ENCODE measurements at regions of chr12 and their contacts with region 1.

Region 1: DNA sequence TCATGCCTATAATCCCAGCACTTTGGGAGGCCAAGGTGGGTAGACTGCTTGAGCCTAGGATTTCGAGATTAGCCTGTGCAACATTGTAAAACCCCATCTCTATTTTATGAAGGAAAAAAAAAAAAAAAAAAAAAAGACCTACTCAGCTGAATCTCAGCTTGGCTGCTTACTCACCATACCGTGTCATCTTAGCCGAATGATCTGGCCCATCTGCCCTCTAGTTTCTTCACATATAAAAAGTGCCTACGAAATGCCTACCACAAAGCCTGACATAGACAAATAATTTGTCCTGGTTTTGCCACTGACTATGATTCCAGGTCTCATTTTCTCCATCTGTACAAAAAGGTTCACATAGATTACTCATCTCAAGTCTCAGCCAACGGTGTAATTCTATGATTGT is 10.1 kb downstream of the DIABLO start:
- DNase-seq: no peak
- ATAC-seq: no peak
- H3K4me3 ChIP-seq: no peak overlapping the region
- H3K27ac ChIP-seq: no peak overlapping the region
- H3K4me1 ChIP-seq: no peaks in the 10 kb centered on the region
- H3K27me3 ChIP-seq: no peaks in the 10 kb centered on the region
- CTCF ChIP-seq: no peak
- POLR2A ChIP-seq: no peak

Region 2: DNA sequence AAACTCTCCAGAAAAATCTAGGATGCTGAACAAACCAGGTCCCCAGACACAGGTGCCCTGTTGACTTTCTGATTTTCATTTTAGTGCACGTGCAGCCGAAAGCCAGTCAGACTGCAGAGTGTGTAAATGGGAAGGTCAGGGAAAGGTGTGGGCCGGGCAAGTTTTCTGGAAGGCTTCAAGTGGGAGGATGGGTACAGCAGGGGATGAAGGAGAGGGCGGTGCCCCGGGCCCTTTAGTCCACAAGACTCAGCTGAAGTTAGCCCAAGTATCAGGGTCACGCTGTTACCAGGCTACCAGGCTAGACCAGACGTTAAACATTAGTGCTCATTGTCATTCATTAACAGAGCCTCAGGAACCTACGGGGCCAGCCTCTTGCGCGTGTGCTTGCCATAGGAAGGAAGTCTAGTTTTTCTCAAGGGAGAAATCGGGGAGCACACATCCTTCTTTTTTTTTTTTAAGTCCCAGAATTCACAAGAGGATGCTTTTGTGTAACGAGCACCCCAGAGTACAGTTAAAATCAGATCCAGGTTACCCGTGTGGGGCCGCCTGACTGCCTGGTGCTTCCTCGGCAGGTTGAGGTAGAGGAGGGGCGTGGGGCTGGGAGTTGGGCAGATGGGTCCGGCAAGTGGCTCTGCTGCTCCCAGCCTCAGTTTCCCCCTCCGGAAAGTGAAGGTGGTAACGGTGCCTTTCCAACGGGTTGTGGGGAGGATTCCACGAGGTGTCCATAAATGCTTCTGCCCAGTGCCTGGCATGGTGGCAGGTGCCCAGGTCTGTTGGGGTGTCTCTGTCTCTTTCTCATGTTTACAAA is 175.0 kb before region 1 on chr12:
- intact Hi-C with region 1: loop called in 1 of 10 experiments (anchors 10 kb)
- DNase-seq: no peak
- ATAC-seq: peak in 2 of 4 donors; percentile 33 to 51
- H3K4me3 ChIP-seq: no peak overlapping the region
- H3K27ac ChIP-seq: no peak overlapping the region
- H3K4me1 ChIP-seq: no peaks in the 10 kb centered on the region
- H3K27me3 ChIP-seq: no peaks in the 10 kb centered on the region
- CTCF ChIP-seq: no peak
- POLR2A ChIP-seq: no peak

Region 3: DNA sequence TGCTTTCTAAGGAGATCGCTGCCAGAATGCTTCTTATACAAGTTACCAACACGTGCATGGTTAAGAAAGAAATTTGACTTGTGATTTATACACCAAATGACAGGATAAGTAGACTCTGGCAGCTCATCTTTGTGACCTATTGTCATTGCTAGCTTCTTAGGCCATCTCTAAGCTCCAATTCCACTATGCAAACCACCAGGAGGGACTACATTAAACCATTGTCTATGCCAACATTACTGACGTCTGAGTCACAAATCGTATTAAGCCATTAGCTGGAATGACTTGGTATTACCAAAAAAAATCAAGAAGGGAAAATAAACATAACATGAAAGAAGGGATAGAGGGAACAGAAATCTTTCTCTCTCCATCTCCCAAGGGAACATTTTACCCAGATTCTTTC is 66.3 kb after region 1 on chr12:
- intact Hi-C with region 1: no loop called
- DNase-seq: no peak
- ATAC-seq: no peak
- H3K4me3 ChIP-seq: no peak overlapping the region
- H3K27ac ChIP-seq: no peak overlapping the region
- H3K4me1 ChIP-seq: no peaks in the 10 kb centered on the region
- H3K27me3 ChIP-seq: no peaks in the 10 kb centered on the region
- CTCF ChIP-seq: no peak
- POLR2A ChIP-seq: no peak

Measured in heart left ventricle (tissue), 16 donors.